Sigmoid colon (tissue), 7 donors: ENCODE measurements at regions of chr7 and their contacts with region 1.

Region 1: DNA sequence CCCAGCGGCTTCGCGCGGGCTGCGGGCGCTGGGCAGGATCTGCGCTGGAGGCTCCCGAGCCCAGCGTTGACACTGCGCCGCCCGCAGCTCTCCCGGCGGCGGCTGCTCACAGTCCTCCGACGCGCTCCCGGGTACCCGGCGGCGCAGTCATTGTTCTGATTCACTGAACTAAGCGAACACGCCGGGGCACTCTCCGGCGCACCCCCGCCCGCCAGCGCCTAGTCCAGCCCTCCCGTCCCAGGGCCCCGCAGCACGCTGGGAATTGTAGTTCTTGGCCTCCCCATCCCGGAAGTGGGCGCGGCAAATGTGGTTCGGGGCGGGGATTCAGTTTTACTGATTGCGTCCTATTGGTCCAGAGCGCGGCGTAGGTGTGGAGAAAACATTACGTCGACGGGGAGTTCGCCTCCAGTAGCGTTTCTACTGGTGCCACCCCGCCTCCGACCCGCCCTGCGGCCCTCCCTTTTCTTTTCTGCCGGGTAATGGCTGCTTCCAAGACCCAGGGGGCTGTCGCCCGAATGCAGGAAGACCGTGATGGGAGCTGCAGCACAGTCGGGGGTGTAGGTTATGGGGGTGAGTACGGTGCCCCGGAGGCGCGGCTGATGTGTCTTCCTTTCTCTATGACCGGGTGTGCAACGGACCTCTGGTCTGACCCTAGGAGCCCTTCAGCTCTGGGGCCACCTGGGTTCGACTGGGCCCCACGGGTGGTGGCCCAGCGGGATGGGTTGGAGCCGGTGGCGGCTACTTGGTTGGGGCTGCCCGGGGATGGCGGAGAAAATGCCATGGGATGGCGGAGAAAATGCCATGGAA is at the starts of genes DOCK4 and ZNF277:
- DNase-seq: peak; percentile 99
- H3K4me3 ChIP-seq: peak within 1 kb of the TSS; percentile 81 to 89 (median 85)
- H3K27ac ChIP-seq: peak within 1 kb of the TSS; percentile 85 to 95 (median 88)
- H3K4me1 ChIP-seq: peaks cover 0 to 27% (median 13%) of the 10 kb centered on the region in 4 donors
- H3K27me3 ChIP-seq: no peaks in the 10 kb centered on the region
- CTCF ChIP-seq: no peak
- EP300 ChIP-seq: no peak
- POLR2A ChIP-seq: peak; percentile 48 to 55
- total RNA-seq, gene DOCK4: 14.1 to 28.5 (median 21.9) TPM
- total RNA-seq, gene ZNF277: 39.0 to 49.3 (median 40.8) TPM

Region 2: GRCh38 chr7:111992601-111993000 is 213.8 kb before region 1 on chr7:
- intact Hi-C with region 1: loop called (anchors 5 kb)
- DNase-seq: no peak
- H3K4me3 ChIP-seq: no peak overlapping the region
- H3K27ac ChIP-seq: peak overlapping the region in 2 of 4 donors; percentile 15 to 52
- H3K4me1 ChIP-seq: peaks cover 0 to 18% (median 8%) of the 10 kb centered on the region in 4 donors
- H3K27me3 ChIP-seq: no peaks in the 10 kb centered on the region
- CTCF ChIP-seq: no peak
- EP300 ChIP-seq: no peak
- POLR2A ChIP-seq: no peak

Region 3: DNA sequence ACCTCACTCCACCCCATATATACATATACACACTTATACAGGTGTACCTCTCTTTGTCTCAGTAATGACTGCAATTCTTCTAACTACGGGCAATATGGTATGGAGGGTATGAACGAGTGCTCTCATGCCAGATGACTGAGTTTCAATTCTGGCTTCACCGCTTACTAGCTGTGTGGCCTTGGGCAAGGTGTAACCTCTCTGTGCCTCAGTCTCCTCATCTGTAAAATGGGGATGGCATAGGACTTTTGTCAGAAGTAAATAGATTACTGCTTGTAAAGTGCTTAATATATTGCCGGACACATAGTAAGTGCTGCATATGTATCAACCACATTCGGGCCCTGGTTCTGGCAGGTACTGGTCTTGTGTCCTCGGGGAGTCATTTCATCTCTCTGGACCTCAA is 183.7 kb after region 1 on chr7:
- intact Hi-C with region 1: loop called (anchors 5 kb)
- DNase-seq: no peak
- H3K4me3 ChIP-seq: no peak overlapping the region
- H3K27ac ChIP-seq: no peak overlapping the region
- H3K4me1 ChIP-seq: peaks cover 0 to 7% (median 5%) of the 10 kb centered on the region in 4 donors
- H3K27me3 ChIP-seq: no peaks in the 10 kb centered on the region
- CTCF ChIP-seq: no peak
- EP300 ChIP-seq: no peak
- POLR2A ChIP-seq: no peak

Region 4: DNA sequence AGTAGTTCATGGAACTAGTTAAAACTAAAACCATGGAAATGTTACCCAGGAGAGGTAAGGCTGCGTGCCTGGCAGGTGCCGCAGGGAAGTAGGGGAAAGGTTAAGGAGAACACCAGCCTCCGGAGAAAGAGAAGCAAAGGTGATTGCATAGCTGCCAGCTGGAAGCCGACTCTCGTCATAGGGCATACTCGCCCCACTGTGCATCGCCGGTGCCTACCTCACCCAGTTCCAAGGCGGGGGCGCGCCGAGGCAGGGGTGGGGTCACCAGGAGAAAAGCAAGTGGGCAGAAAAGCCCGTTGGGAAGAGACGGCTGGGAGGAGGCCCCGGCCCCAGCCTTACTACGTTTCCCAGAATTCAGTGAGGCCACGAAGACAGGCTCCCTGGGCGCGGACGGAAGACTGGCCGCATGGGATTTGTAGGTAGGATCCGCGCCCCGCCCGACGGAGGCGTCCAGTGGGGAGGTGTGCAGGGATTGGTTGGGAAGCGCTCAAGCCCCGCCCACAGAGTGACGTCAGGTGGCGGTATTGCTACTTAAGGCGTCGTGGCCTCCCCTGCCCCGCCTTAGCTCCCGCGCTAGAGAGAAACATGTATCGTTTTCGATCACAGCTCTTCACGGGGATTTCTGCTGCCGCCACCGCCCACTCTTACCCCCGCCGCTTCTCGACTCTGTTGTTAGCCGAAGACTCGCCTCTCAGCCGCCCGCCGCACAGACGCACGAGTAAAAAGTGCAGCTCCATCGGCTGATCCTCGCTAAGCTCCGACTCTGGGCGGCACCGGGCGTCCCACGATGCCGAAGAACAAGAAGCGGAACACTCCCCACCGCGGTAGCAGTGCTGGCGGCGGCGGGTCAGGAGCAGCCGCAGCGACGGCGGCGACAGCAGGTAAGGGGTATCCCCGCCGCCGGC is 243.7 kb after region 1 on chr7 and contains the start of gene IFRD1:
- intact Hi-C with region 1: loop called (anchors 2 kb)
- DNase-seq: peak; percentile 100
- H3K4me3 ChIP-seq: peak within 1 kb of the TSS; percentile 78 to 100 (median 97)
- H3K27ac ChIP-seq: peak within 1 kb of the TSS; percentile 94 to 100 (median 100)
- H3K4me1 ChIP-seq: peaks cover 0 to 45% (median 37%) of the 10 kb centered on the region in 4 donors
- H3K27me3 ChIP-seq: no peaks in the 10 kb centered on the region
- CTCF ChIP-seq: no peak
- EP300 ChIP-seq: peak in 1 of 4 donors; percentile 20
- POLR2A ChIP-seq: peak; percentile 99
- total RNA-seq, gene IFRD1: 45.7 to 63.7 (median 49.7) TPM

Region 5: DNA sequence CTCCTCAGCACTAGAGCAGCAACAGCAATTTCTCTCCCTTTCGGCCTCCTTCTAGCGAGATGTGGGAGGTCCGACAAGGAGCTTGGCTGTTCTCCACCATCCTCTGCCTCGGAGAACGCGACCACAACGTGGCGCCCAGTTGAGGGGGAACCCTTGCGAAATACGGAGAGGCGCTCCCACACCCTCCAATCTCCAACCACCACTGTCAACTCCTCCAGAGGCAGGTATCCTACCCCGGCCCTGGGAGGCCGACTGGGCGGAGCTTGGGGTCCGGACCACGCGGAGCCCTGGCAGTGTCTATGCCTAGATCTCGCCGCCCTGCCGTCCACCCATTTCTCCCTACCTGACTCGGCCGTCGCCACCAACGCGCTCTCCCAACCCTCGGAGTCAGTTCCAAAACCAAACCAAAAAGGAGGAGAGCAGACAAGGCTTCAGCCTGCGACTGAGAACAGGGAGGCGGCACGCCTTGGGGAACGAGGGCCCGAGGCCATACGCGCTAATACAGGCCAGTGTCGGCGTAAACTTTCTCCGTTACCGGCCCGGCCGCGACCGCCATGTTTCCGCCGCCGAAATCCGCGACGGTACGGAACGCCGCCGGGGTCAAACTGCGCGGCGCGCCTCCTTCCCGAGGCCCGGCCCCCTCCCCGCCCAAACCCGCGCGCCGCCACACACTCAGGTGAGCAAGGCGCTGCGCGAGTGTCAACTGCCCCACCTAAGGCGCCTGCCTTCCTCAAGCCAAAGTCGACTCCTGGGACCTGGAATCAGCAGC is 583.6 kb after region 1 on chr7 and contains the start of gene TMEM168:
- intact Hi-C with region 1: loop called (anchors 5 kb)
- DNase-seq: peak; percentile 84
- H3K4me3 ChIP-seq: peak within 1 kb of the TSS; percentile 67 to 93 (median 78)
- H3K27ac ChIP-seq: peak within 1 kb of the TSS; percentile 86 to 90 (median 88)
- H3K4me1 ChIP-seq: peaks cover 0 to 14% (median 12%) of the 10 kb centered on the region in 4 donors
- H3K27me3 ChIP-seq: no peaks in the 10 kb centered on the region
- CTCF ChIP-seq: no peak
- EP300 ChIP-seq: no peak
- POLR2A ChIP-seq: peak; percentile 32 to 49
- total RNA-seq, gene TMEM168: 14.3 to 24.3 (median 16.4) TPM